ENCODE measurements at regions of chr20 and their contacts with region 1.

Region 1: GRCh38 chr20:62793912-62794724 is 2.2 kb upstream of the MRGBP start:
- DNase-seq: peak; percentile 79 to 97
- H3K4me3 ChIP-seq: peak overlapping the region; percentile 89
- H3K27ac ChIP-seq: peak overlapping the region; percentile 90 to 94
- H3K4me1 ChIP-seq: peaks cover 4 to 15% of the 10 kb centered on the region in 2 donors
- H3K27me3 ChIP-seq: no peaks in the 10 kb centered on the region
- CTCF ChIP-seq: no peak

Region 2: GRCh38 chr20:62065669-62066338 is 728.3 kb before region 1 on chr20 and contains the start of gene TAF4:
- intact Hi-C with region 1: loop called (anchors 10 kb)
- DNase-seq: peak in 1 of 2 donors; percentile 85
- H3K4me3 ChIP-seq: peak within 1 kb of the TSS; percentile 81 to 86
- H3K27ac ChIP-seq: peak within 1 kb of the TSS; percentile 89 to 93
- H3K4me1 ChIP-seq: peaks cover 4 to 20% of the 10 kb centered on the region in 2 donors
- H3K27me3 ChIP-seq: no peaks in the 10 kb centered on the region
- CTCF ChIP-seq: no peak
- total RNA-seq, gene TAF4: 166 TPM

Region 3: GRCh38 chr20:62237801-62238571 is 556.1 kb before region 1 on chr20 and contains the start of gene OSBPL2:
- intact Hi-C with region 1: loop called (anchors 2 kb)
- DNase-seq: peak; percentile 97 to 99
- H3K4me3 ChIP-seq: peak within 1 kb of the TSS; percentile 86 to 96
- H3K27ac ChIP-seq: peak within 1 kb of the TSS; percentile 88 to 95
- H3K4me1 ChIP-seq: peaks cover 2 to 7% of the 10 kb centered on the region in 2 donors
- H3K27me3 ChIP-seq: no peaks in the 10 kb centered on the region
- CTCF ChIP-seq: no peak
- total RNA-seq, gene OSBPL2: 25.0 TPM

Region 4: DNA sequence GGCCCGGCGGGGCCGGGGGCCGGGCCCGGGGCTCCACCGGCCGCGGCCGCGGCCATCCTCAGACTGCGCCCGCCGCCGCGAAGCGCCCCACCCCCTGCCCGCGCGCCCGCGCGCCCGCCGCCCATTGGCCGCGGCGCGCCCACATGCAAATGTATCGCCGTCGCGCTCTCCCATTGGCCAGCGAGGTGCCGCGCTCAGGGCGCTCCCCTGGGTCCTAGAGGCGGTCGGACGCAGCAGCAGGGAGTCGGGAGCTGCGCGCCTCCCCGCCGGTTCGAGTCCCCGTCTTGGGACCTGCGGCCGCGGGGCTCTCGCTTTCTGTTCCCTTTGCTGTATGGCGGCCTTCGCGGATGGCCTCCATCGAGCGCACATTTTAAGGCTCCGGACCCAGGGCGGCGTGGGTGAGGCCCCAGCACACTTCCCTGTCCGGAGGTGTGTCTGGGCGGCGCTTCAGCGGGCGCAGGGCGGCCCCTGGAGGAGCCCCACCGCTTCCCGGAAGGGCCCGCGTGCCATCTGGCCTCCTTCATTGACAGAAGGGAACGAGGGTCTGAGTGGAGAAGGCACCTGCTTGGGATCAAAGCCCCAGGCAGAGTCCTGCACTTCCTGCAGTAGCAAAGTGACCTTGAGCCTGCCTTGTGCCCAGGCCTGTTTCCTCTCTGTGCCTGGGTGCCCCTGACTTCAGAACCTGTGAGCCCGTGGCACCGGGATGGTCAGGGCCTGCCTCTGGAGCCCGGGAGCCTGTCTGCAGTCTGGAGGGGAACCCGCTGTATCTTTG is 386.7 kb before region 1 on chr20 and contains the start of gene CABLES2:
- intact Hi-C with region 1: loop called (anchors 5 kb)
- DNase-seq: peak; percentile 87 to 96
- H3K4me3 ChIP-seq: peak within 1 kb of the TSS; percentile 69 to 81
- H3K27ac ChIP-seq: peak within 1 kb of the TSS; percentile 48 to 72
- H3K4me1 ChIP-seq: peaks cover 10 to 24% of the 10 kb centered on the region in 2 donors
- H3K27me3 ChIP-seq: no peaks in the 10 kb centered on the region
- CTCF ChIP-seq: peak in 1 of 3 experiments; percentile 25
- total RNA-seq, gene CABLES2: 0.43 TPM

Region 5: GRCh38 chr20:62668441-62669027 is 125.6 kb before region 1 on chr20:
- intact Hi-C with region 1: loop called (anchors 2 kb)
- DNase-seq: peak in 1 of 2 donors; percentile 78
- H3K4me3 ChIP-seq: no peak overlapping the region
- H3K27ac ChIP-seq: no peak overlapping the region
- H3K4me1 ChIP-seq: no peaks in the 10 kb centered on the region
- H3K27me3 ChIP-seq: no peaks in the 10 kb centered on the region
- CTCF ChIP-seq: peak; percentile 46 to 75 (median 68)

Region 6: DNA sequence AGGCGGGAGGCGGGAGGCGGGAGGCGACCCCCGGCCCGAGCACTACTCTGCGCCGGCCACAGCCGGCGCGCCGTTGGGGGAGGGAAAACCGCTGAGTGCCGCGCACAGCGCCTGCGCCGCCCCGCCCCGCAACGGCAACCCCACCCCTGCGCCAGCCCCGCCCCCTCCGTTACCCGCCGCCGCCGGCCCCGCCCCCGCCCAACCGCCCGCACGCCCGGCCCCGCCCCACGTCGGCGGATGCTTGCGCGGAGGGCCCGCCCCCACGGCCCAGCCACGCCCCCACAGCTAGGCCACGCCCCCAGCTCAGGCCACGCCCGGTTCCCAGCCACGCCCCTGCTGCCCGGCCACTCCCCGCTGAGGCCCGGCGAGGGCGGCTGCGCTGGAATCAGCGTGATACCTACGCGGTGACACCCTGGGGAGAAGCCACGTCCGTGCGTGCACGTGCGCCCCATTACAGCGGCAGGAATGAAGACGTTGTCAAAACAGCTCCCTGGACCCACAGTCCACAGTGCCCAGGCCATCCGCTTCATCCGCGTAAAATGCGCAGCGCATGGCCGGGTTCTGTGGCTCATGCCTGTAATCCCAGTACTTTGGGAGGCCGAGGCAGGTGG is 67.7 kb after region 1 on chr20 and contains the start of gene TCFL5:
- intact Hi-C with region 1: loop called (anchors 5 kb)
- DNase-seq: peak; percentile 53 to 93
- H3K4me3 ChIP-seq: peak within 1 kb of the TSS; percentile 57 to 69
- H3K27ac ChIP-seq: peak within 1 kb of the TSS; percentile 56 to 63
- H3K4me1 ChIP-seq: peaks cover 4 to 7% of the 10 kb centered on the region in 2 donors
- H3K27me3 ChIP-seq: no peaks in the 10 kb centered on the region
- CTCF ChIP-seq: no peak
- total RNA-seq, gene TCFL5: 1.1 TPM

Region 7: GRCh38 chr20:63216041-63216848 is 422.1 kb after region 1 on chr20 and contains the start of gene YTHDF1:
- intact Hi-C with region 1: loop called (anchors 5 kb)
- DNase-seq: peak; percentile 87 to 97
- H3K4me3 ChIP-seq: peak within 1 kb of the TSS; percentile 98
- H3K27ac ChIP-seq: peak within 1 kb of the TSS; percentile 73 to 84
- H3K4me1 ChIP-seq: peaks cover 0 to 18% of the 10 kb centered on the region in 2 donors
- H3K27me3 ChIP-seq: no peaks in the 10 kb centered on the region
- CTCF ChIP-seq: no peak
- total RNA-seq, gene YTHDF1: 14.2 TPM

Measured in ascending aorta (tissue), 2 donors.